CD8-positive, alpha-beta T cell (primary cell): ENCODE measurements at regions of chr10 and their contacts with region 1.

Region 1: DNA sequence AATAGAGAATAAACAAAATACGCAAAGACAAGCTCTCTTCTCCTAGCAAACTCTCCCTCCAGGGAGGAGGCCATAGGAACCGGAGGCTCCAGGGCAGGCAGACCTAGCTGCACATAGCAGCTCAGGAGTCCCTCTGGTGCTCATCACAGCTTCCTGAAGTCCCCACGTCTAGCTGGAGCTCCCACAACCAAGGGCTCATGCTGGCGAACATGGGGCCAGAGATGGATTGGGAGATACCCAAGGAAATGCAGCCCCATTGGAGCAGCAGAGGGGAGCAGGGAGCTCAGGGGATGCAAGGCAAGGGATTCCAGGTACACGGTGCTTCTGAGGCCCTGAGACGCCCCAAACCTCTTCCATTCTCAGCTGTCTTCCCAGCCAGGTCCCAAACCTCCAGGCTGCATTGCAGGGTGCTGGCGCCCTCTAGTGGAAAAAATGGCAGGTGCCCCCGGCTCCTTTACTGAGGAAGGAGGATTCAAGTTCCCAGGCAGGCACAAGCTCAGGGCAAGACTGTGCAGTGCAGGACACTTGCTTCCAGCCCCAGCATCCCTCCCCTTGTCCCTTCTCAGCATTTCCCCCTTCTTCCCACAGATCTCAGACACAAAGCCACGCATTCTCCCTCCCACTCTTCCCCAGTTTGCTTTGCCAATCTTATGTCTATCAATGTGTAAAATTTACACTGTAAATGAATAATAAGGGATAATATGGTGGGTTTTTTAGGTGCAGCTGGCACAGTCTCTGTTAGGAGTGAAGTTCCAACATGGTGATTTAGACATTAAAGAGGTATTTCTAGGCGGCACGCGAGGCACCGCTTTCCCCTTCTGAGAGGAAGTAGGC is 46.2 kb downstream of the GPAM start:
- DNase-seq: peak; percentile 17 to 68 (median 55)
- ATAC-seq: peak; percentile 45
- H3K4me3 ChIP-seq: no peak overlapping the region
- H3K4me3 Mint-ChIP-seq: no peak overlapping the region
- H3K27ac ChIP-seq: no peak overlapping the region
- H3K27ac Mint-ChIP-seq: no peak overlapping the region
- H3K4me1 ChIP-seq: no peaks in the 10 kb centered on the region
- H3K4me1 Mint-ChIP-seq: no peaks in the 10 kb centered on the region
- H3K27me3 ChIP-seq: no peaks in the 10 kb centered on the region
- H3K27me3 Mint-ChIP-seq: peaks cover 6% of the 10 kb centered on the region
- CTCF ChIP-seq: peak; percentile 83

Region 2: GRCh38 chr10:110311357-110311949 is 1825.9 kb before region 1 on chr10:
- CTCF ChIA-PET with region 1: no interaction called
- POLR2A ChIA-PET with region 1: no interaction called
- intact Hi-C with region 1: loop called in 1 of 2 experiments (anchors 5 kb)
- DNase-seq: peak in 5 of 9 experiments; percentile 11 to 72 (median 22)
- ATAC-seq: peak; percentile 73
- H3K4me3 ChIP-seq: no peak overlapping the region
- H3K4me3 Mint-ChIP-seq: no peak overlapping the region
- H3K27ac ChIP-seq: no peak overlapping the region
- H3K27ac Mint-ChIP-seq: no peak overlapping the region
- H3K4me1 ChIP-seq: no peaks in the 10 kb centered on the region
- H3K4me1 Mint-ChIP-seq: no peaks in the 10 kb centered on the region
- H3K27me3 ChIP-seq: peaks cover 0 to 2% of the 10 kb centered on the region in 2 experiments
- H3K27me3 Mint-ChIP-seq: peaks cover 2% of the 10 kb centered on the region
- CTCF ChIP-seq: peak; percentile 50

Region 3: GRCh38 chr10:110556969-110557601 is 1580.3 kb before region 1 on chr10:
- CTCF ChIA-PET with region 1: interaction called, 3 read pairs
- POLR2A ChIA-PET with region 1: no interaction called
- intact Hi-C with region 1: loop called in 1 of 2 experiments (anchors 2 kb)
- DNase-seq: peak; percentile 37 to 85 (median 71)
- ATAC-seq: peak; percentile 99
- H3K4me3 ChIP-seq: no peak overlapping the region
- H3K4me3 Mint-ChIP-seq: no peak overlapping the region
- H3K27ac ChIP-seq: no peak overlapping the region
- H3K27ac Mint-ChIP-seq: no peak overlapping the region
- H3K4me1 ChIP-seq: no peaks in the 10 kb centered on the region
- H3K4me1 Mint-ChIP-seq: peaks cover 3% of the 10 kb centered on the region
- H3K27me3 ChIP-seq: no peaks in the 10 kb centered on the region
- H3K27me3 Mint-ChIP-seq: peaks cover 6% of the 10 kb centered on the region
- CTCF ChIP-seq: peak; percentile 82

Region 4: DNA sequence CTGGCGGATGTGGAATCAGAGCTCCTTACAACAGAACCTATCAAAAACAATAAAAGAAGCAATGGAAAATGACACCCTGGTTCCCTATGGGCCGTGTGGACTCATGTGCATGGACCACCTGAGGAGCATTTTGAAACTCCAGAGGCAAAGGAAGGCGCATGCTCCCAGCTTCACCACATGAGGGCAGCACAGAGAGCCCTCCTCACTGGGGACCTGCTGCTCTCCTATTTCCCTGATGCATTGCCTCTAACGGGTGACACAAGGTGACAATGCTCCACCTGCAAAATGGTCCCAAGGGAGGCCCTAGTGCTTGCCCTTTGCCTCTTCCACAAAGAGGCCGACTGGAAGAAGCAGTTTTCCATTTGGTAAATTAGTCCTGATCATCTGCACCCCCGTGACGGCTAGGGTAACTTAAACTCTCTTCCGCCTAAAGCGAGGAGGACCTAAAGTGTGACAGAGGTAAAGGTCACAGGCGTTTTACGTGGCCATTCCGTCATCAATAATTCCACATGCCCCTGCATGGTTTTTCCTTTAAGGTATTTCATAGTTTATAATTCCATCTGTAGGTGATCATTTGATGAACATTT is 21.5 kb before region 1 on chr10:
- CTCF ChIA-PET with region 1: interaction called, 21 read pairs
- POLR2A ChIA-PET with region 1: no interaction called
- intact Hi-C with region 1: no loop called
- DNase-seq: peak in 6 of 9 experiments; percentile 7 to 49 (median 34)
- ATAC-seq: no peak
- H3K4me3 ChIP-seq: no peak overlapping the region
- H3K4me3 Mint-ChIP-seq: no peak overlapping the region
- H3K27ac ChIP-seq: no peak overlapping the region
- H3K27ac Mint-ChIP-seq: no peak overlapping the region
- H3K4me1 ChIP-seq: no peaks in the 10 kb centered on the region
- H3K4me1 Mint-ChIP-seq: no peaks in the 10 kb centered on the region
- H3K27me3 ChIP-seq: no peaks in the 10 kb centered on the region
- H3K27me3 Mint-ChIP-seq: no peaks in the 10 kb centered on the region
- CTCF ChIP-seq: peak; percentile 58

Region 5: DNA sequence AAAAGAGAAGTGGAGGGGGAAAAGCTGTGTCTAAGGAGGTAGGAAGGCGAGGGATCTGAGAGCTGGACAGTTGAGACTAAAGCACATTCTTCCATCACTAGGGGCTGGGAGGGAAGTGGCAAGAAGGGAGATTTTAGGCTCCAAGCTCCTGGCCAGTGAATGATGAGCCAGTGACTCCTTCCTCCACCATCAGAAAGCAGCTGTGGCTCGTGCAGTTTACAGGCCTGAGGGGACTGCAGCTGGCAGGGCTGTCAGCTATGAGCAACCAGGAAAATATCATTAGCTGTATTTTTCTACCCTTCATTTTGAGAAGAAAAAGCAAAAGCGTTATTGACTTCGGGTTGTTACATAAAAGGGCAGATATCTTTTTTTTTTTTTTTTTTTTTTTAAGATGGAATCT is 14.5 kb before region 1 on chr10:
- CTCF ChIA-PET with region 1: interaction called, 29 read pairs
- POLR2A ChIA-PET with region 1: interaction called, 3 read pairs
- intact Hi-C with region 1: no loop called
- DNase-seq: no peak
- ATAC-seq: no peak
- H3K4me3 ChIP-seq: no peak overlapping the region
- H3K4me3 Mint-ChIP-seq: no peak overlapping the region
- H3K27ac ChIP-seq: no peak overlapping the region
- H3K27ac Mint-ChIP-seq: no peak overlapping the region
- H3K4me1 ChIP-seq: no peaks in the 10 kb centered on the region
- H3K4me1 Mint-ChIP-seq: no peaks in the 10 kb centered on the region
- H3K27me3 ChIP-seq: no peaks in the 10 kb centered on the region
- H3K27me3 Mint-ChIP-seq: no peaks in the 10 kb centered on the region
- CTCF ChIP-seq: no peak

Region 6: GRCh38 chr10:112151524-112152039 is 14.2 kb after region 1 on chr10:
- CTCF ChIA-PET with region 1: interaction called, 18 read pairs
- POLR2A ChIA-PET with region 1: interaction called, 3 read pairs
- intact Hi-C with region 1: no loop called
- DNase-seq: no peak
- ATAC-seq: no peak
- H3K4me3 ChIP-seq: no peak overlapping the region
- H3K4me3 Mint-ChIP-seq: no peak overlapping the region
- H3K27ac ChIP-seq: no peak overlapping the region
- H3K27ac Mint-ChIP-seq: no peak overlapping the region
- H3K4me1 ChIP-seq: no peaks in the 10 kb centered on the region
- H3K4me1 Mint-ChIP-seq: no peaks in the 10 kb centered on the region
- H3K27me3 ChIP-seq: no peaks in the 10 kb centered on the region
- H3K27me3 Mint-ChIP-seq: no peaks in the 10 kb centered on the region
- CTCF ChIP-seq: no peak

Region 7: DNA sequence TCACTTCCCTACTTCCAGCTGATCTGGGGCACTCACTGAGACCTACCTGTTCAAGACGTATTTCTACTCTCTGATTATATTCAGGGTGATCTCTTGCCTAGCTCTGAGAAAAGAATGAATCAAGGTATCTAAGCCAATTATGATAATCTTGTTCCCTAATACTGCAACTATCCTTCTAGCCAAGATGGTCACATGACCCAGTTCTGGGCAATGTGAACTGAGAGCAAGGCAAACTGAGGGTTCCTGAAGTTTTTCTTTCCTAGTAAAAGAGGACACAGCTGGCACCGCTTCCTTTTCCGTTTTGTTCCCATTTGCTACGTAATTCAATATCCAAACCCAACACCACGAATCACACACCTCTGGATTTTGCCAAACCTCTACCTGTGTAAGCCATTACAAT is 52.1 kb after region 1 on chr10:
- CTCF ChIA-PET with region 1: no interaction called
- POLR2A ChIA-PET with region 1: no interaction called
- intact Hi-C with region 1: no loop called
- DNase-seq: no peak
- ATAC-seq: no peak
- H3K4me3 ChIP-seq: no peak overlapping the region
- H3K4me3 Mint-ChIP-seq: no peak overlapping the region
- H3K27ac ChIP-seq: no peak overlapping the region
- H3K27ac Mint-ChIP-seq: no peak overlapping the region
- H3K4me1 ChIP-seq: peaks cover 2% of the 10 kb centered on the region
- H3K4me1 Mint-ChIP-seq: peaks cover 3% of the 10 kb centered on the region
- H3K27me3 ChIP-seq: no peaks in the 10 kb centered on the region
- H3K27me3 Mint-ChIP-seq: no peaks in the 10 kb centered on the region
- CTCF ChIP-seq: no peak

Region 8: GRCh38 chr10:112215342-112215774 is 78.0 kb after region 1 on chr10:
- CTCF ChIA-PET with region 1: no interaction called
- POLR2A ChIA-PET with region 1: no interaction called
- intact Hi-C with region 1: no loop called
- DNase-seq: no peak
- ATAC-seq: no peak
- H3K4me3 ChIP-seq: no peak overlapping the region
- H3K4me3 Mint-ChIP-seq: no peak overlapping the region
- H3K27ac ChIP-seq: no peak overlapping the region
- H3K27ac Mint-ChIP-seq: no peak overlapping the region
- H3K4me1 ChIP-seq: no peaks in the 10 kb centered on the region
- H3K4me1 Mint-ChIP-seq: no peaks in the 10 kb centered on the region
- H3K27me3 ChIP-seq: no peaks in the 10 kb centered on the region
- H3K27me3 Mint-ChIP-seq: peaks cover 10% of the 10 kb centered on the region
- CTCF ChIP-seq: no peak

Region 9: GRCh38 chr10:112434988-112435619 is 297.7 kb after region 1 on chr10:
- CTCF ChIA-PET with region 1: interaction called, 5 read pairs
- POLR2A ChIA-PET with region 1: no interaction called
- intact Hi-C with region 1: loop called in 1 of 2 experiments (anchors 5 kb)
- DNase-seq: peak in 2 of 9 experiments; percentile 43 to 56
- ATAC-seq: peak; percentile 36
- H3K4me3 ChIP-seq: no peak overlapping the region
- H3K4me3 Mint-ChIP-seq: no peak overlapping the region
- H3K27ac ChIP-seq: no peak overlapping the region
- H3K27ac Mint-ChIP-seq: no peak overlapping the region
- H3K4me1 ChIP-seq: no peaks in the 10 kb centered on the region
- H3K4me1 Mint-ChIP-seq: no peaks in the 10 kb centered on the region
- H3K27me3 ChIP-seq: no peaks in the 10 kb centered on the region
- H3K27me3 Mint-ChIP-seq: no peaks in the 10 kb centered on the region
- CTCF ChIP-seq: peak; percentile 63